ENCODE measurements at regions of chrX and their contacts with region 1.

Region 1: DNA sequence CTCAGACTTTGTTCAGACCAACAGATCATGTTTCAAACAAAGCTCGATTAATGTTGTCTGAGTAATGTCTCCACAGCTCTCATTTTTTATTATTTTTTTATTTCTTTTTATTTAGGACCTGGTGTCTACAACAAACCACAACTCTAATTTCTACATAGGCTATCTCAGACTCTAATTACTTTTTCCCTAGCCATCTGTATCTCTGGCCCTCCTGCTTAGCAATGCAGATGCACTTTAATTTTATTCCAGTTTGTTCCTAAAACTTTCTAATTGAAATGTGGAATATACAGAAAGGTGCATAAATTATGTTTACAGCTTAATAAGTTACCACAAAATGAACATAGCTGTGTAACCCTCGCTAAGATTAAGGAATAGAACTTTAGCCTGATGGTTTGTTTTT is 119.2 kb upstream of the MID1IP1 start:
- DNase-seq: no peak

Region 2: GRCh38 chrX:38666909-38667308 is 15.2 kb before region 1 on chrX:
- intact Hi-C with region 1: loop called in 1 of 2 experiments (anchors 1 kb)
- DNase-seq: no peak

Region 3: GRCh38 chrX:38726597-38726996 is 44.5 kb after region 1 on chrX:
- intact Hi-C with region 1: no loop called
- DNase-seq: no peak

Region 4: GRCh38 chrX:38754102-38754790 is 72.2 kb after region 1 on chrX:
- intact Hi-C with region 1: no loop called
- DNase-seq: no peak

Measured in posterior vena cava (tissue), 2 donors.